ENCODE measurements at regions of chr7 and their contacts with region 1.

Region 1: DNA sequence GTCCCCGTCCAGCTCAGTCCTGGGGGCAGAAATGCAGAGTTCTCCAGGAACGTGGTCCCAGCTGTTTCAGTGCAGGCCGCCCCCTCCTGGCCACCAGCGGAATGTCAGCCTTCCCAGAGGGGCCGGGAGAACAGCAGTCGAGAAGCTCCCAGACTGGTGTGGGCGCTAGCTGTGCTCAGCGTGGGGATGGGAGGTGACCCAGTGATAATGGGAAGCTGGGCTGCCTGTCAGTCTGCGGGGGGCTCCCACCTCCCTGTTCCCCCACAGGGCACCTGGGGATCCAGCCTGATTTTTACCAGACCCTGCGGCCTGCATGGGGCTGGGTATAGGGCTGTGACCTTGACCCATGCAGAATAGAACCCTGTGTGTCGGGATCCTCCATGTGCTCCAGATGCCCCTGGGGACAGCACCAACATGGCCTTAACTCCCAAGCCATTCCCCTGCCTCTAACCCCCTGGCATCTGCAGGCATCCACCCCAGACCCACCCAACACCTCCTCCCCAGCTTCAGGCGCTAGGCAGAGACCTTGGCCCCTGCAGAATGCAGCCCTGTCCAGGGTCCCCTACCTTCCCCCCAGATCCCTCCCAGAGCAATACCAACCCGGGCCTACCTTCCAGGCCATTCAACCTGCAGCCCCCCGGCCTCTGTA is 946 bp upstream of the ELN start:
- DNase-seq: peak; percentile 64 to 95 (median 89)

Region 2: GRCh38 chr7:73865738-73866445 is 161.1 kb before region 1 on chr7:
- intact Hi-C with region 1: loop called (anchors 5 kb)
- DNase-seq: peak in 36 of 42 donors; percentile 23 to 72 (median 50)

Region 3: GRCh38 chr7:74289018-74289658 is 262.1 kb after region 1 on chr7 and contains the start of gene CLIP2:
- intact Hi-C with region 1: no loop called
- DNase-seq: peak; percentile 67 to 95 (median 88)